Endothelial cell of umbilical vein (primary cell): ENCODE measurements at regions of chr14 and their contacts with region 1.

Region 1: GRCh38 chr14:71923513-71923912 is 8.7 kb upstream of the RGS6 start:
- DNase-seq: no peak
- H3K4me3 ChIP-seq: no peak overlapping the region
- H3K27ac ChIP-seq: no peak overlapping the region
- H3K4me1 ChIP-seq: no peaks in the 10 kb centered on the region
- H3K27me3 ChIP-seq: no peaks in the 10 kb centered on the region
- CTCF ChIP-seq: no peak
- POLR2A ChIP-seq: no peak

Region 2: GRCh38 chr14:70726651-70727375 is 1196.7 kb before region 1 on chr14:
- CTCF ChIA-PET with region 1: no interaction called
- POLR2A ChIA-PET with region 1: no interaction called
- dilution Hi-C with region 1: no loop called
- intact Hi-C with region 1: loop called (anchors 5 kb)
- DNase-seq: no peak
- H3K4me3 ChIP-seq: no peak overlapping the region
- H3K27ac ChIP-seq: no peak overlapping the region
- H3K4me1 ChIP-seq: no peaks in the 10 kb centered on the region
- H3K27me3 ChIP-seq: no peaks in the 10 kb centered on the region
- CTCF ChIP-seq: no peak
- POLR2A ChIP-seq: no peak

Region 3: DNA sequence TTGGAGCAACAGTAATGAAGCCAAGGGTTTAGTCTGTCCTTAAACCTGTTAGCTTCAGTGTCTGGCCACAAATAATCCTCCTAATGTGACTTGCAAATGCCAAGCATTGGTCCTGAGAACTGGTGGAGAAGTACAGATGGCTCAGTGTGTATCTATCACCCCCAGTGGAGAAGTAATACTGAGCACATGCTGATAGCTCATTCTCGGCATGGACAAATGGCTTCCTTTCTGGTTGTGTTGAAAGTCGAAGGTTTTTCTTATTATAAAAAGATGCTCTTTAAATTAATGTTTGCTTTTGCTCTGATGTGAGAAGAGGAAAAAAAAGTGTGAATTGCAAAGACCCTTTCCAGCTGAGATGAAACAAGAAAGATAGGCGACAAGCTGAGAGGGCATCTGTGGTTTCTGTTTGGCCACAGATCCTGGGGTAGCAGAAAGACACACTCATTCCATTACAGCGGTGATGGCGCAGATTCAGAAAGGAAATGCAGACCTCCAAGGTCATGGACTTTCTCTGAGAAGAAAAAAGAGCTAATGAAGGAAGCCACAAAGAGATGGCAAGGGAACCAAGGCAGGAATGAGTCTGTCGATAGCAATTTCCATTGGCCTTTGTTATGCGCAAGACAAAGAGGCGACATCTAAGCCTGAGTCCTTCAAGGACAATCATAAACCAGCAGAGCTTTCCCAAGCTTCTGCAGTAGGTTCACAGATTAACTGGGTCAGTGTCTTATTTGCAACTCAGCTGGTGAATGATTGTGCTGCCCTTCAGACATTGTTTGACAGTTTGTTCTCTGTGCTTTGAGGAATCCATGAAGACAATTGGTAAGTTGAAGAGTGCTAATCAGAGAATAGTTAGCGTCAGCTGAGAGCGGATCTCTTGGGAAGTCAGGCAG is 146.8 kb before region 1 on chr14:
- CTCF ChIA-PET with region 1: no interaction called
- POLR2A ChIA-PET with region 1: no interaction called
- dilution Hi-C with region 1: no loop called
- intact Hi-C with region 1: no loop called
- DNase-seq: peak; percentile 64
- H3K4me3 ChIP-seq: no peak overlapping the region
- H3K27ac ChIP-seq: no peak overlapping the region
- H3K4me1 ChIP-seq: peaks cover 20% of the 10 kb centered on the region
- H3K27me3 ChIP-seq: peaks cover 0 to 2% of the 10 kb centered on the region in 2 experiments
- CTCF ChIP-seq: no peak
- POLR2A ChIP-seq: no peak

Region 4: DNA sequence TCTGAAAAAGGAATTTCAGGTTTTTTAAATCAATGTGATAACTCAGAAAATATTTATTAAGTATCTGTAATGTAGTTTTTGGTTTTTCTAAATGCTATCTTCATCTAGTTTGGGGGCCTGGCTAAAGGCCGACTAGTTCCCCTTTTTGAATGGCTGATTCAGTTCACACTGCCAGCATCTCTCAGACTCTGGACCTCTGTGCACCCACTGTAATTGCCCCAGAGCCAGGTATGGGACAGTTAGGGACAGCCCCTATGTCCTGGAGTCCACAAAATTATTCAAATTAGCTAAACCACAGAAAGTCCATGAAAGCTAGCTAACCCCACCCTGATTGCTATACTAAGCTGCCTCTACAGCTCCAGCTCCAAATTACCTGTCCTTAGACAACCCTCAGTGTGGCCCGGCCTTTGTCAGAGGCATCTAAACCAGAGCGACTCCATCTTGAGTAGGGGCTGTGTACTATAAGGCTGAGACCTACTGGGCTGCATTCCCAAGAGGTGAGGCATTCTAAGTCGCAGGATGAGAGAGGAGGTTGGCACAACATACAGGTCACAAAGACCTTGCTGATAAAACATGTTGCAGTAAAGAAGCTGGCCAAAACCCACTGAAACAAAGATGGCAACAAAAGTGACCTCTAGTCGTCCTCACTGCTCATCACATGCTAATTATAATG is 40.3 kb before region 1 on chr14:
- CTCF ChIA-PET with region 1: no interaction called
- POLR2A ChIA-PET with region 1: no interaction called
- dilution Hi-C with region 1: no loop called
- intact Hi-C with region 1: no loop called
- DNase-seq: no peak
- H3K4me3 ChIP-seq: no peak overlapping the region
- H3K27ac ChIP-seq: no peak overlapping the region
- H3K4me1 ChIP-seq: no peaks in the 10 kb centered on the region
- H3K27me3 ChIP-seq: no peaks in the 10 kb centered on the region
- CTCF ChIP-seq: no peak
- POLR2A ChIP-seq: no peak